ENCODE measurements at regions of chr3 and their contacts with region 1.

Region 1: GRCh38 chr3:187986514-187986934 is 167.4 kb upstream of the LPP start:
- DNase-seq: no peak
- H3K4me3 ChIP-seq: no peak overlapping the region
- H3K27ac ChIP-seq: peak overlapping the region; percentile 2
- H3K4me1 ChIP-seq: peaks cover 95% of the 10 kb centered on the region
- CTCF ChIP-seq: no peak

Region 2: DNA sequence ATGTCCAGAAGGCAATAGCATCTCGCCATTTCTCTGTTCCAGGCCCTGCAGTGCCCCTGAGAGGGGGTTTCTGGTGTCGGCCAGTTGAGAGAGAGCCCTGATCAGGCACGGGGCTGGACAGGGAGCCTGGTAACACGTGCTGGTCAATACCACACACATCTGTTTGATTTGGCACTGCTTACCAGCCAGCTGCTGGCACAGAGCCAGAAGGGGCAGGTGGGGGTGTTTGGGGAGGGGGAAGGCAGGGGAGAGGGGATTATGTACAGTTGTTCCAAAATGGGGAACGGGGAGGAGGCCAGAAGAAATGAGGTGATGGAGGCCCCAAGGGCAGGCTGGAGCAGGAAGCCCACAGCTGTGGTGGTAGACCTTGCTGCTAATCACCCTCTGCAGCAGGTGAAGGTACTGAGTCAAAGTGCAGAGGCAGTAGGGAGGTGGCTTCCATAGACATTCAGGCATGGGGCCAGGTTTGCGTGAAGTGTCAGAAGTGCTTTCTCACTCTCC is 13.9 kb after region 1 on chr3:
- CTCF ChIA-PET with region 1: interaction called, 5 read pairs
- POLR2A ChIA-PET with region 1: interaction called, 122 read pairs
- intact Hi-C with region 1: loop called (anchors 1 kb)
- DNase-seq: peak; percentile 82
- H3K4me3 ChIP-seq: peak overlapping the region; percentile 60
- H3K27ac ChIP-seq: peak overlapping the region; percentile 96
- H3K4me1 ChIP-seq: peaks cover 83% of the 10 kb centered on the region
- CTCF ChIP-seq: no peak